Activated B cell treated with CpG ODN at 0.5 μM for 24 hours (primary cell): ENCODE measurements at regions of chr11 and their contacts with region 1.

Region 1: GRCh38 chr11:78338138-78338537 is 79.5 kb downstream of the GAB2 start:
- DNase-seq: no peak
- ATAC-seq: no peak
- H3K4me3 Mint-ChIP-seq: no peak overlapping the region
- H3K27ac Mint-ChIP-seq: no peak overlapping the region
- H3K4me1 Mint-ChIP-seq: peaks cover 37% of the 10 kb centered on the region
- H3K27me3 Mint-ChIP-seq: no peaks in the 10 kb centered on the region
- CTCF ChIP-seq: no peak

Region 2: DNA sequence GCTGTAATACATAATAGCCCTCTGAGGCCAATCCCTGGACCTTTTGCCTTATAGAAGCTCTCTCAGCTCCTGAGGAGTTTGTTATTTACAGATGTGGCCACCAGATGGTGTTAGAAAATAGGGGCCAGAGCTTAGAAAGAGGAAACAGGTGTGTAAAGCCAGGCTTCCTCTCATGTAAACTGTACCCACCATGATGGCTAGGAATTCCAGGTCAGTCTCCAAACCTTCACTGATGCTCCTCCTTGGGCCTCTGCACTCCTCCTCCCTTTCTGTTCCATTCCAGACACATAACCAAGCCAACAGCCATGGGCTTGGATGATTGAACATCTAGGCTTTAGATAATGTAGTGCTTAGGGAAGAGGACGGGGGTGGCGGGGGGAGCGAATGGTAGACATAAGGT is 109.7 kb before region 1 on chr11:
- CTCF ChIA-PET with region 1: no interaction called
- POLR2A ChIA-PET with region 1: no interaction called
- intact Hi-C with region 1: loop called (anchors 10 kb)
- DNase-seq: no peak
- ATAC-seq: peak; percentile 66
- H3K4me3 Mint-ChIP-seq: no peak overlapping the region
- H3K27ac Mint-ChIP-seq: no peak overlapping the region
- H3K4me1 Mint-ChIP-seq: peaks cover 42% of the 10 kb centered on the region
- H3K27me3 Mint-ChIP-seq: no peaks in the 10 kb centered on the region
- CTCF ChIP-seq: no peak

Region 3: DNA sequence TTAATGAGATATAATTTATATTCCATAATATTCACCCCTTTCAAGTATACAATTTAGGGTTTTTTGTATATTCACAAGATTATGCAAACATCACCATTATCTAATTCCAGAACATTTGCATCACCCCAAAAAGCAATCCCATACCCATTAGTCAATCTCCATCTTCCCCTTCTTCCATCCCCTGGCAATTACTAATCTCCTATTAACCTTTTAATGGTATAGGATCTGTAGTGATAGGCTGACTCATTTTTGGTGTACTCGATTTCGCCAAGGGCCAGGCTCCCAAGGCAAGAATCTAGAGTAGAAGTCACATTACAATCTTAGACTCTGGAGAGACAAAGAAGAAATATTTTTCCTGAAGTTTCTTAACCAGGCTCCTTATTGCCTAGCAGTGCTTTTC is 33.9 kb before region 1 on chr11:
- CTCF ChIA-PET with region 1: no interaction called
- POLR2A ChIA-PET with region 1: no interaction called
- intact Hi-C with region 1: loop called (anchors 5 kb)
- DNase-seq: no peak
- ATAC-seq: no peak
- H3K4me3 Mint-ChIP-seq: no peak overlapping the region
- H3K27ac Mint-ChIP-seq: no peak overlapping the region
- H3K4me1 Mint-ChIP-seq: peaks cover 31% of the 10 kb centered on the region
- H3K27me3 Mint-ChIP-seq: no peaks in the 10 kb centered on the region
- CTCF ChIP-seq: no peak